ENCODE measurements at regions of chr17 and their contacts with region 1.

Region 1: GRCh38 chr17:34637548-34638525 is 58.5 kb downstream of the TMEM132E start:
- DNase-seq: peak; percentile 62 to 90 (median 82)
- ATAC-seq: peak; percentile 97
- H3K4me3 ChIP-seq: peak overlapping the region; percentile 67 to 84
- H3K4me3 Mint-ChIP-seq: peak overlapping the region; percentile 91
- H3K27ac ChIP-seq: peak overlapping the region in 1 of 2 experiments; percentile 24
- H3K27ac Mint-ChIP-seq: no peak overlapping the region
- H3K4me1 ChIP-seq: peaks cover 18% of the 10 kb centered on the region
- H3K4me1 Mint-ChIP-seq: peaks cover 17% of the 10 kb centered on the region
- H3K27me3 ChIP-seq: no peaks in the 10 kb centered on the region
- H3K27me3 Mint-ChIP-seq: peaks cover 6% of the 10 kb centered on the region
- CTCF ChIP-seq: peak; percentile 77

Region 2: GRCh38 chr17:34420254-34420766 is 217.5 kb before region 1 on chr17:
- CTCF ChIA-PET with region 1: interaction called, 8 read pairs
- POLR2A ChIA-PET with region 1: no interaction called
- intact Hi-C with region 1: loop called in 1 of 2 experiments (anchors 1 kb)
- DNase-seq: peak; percentile 26 to 79 (median 67)
- ATAC-seq: peak; percentile 64
- H3K4me3 ChIP-seq: no peak overlapping the region
- H3K4me3 Mint-ChIP-seq: no peak overlapping the region
- H3K27ac ChIP-seq: no peak overlapping the region
- H3K27ac Mint-ChIP-seq: no peak overlapping the region
- H3K4me1 ChIP-seq: no peaks in the 10 kb centered on the region
- H3K4me1 Mint-ChIP-seq: no peaks in the 10 kb centered on the region
- H3K27me3 ChIP-seq: peaks cover 0 to 4% of the 10 kb centered on the region in 2 experiments
- H3K27me3 Mint-ChIP-seq: peaks cover 40% of the 10 kb centered on the region
- CTCF ChIP-seq: peak; percentile 96

Region 3: GRCh38 chr17:34542700-34543336 is 95.0 kb before region 1 on chr17:
- CTCF ChIA-PET with region 1: interaction called, 25 read pairs
- POLR2A ChIA-PET with region 1: no interaction called
- intact Hi-C with region 1: loop called (anchors 2 kb)
- DNase-seq: peak in 8 of 9 experiments; percentile 16 to 71 (median 59)
- ATAC-seq: no peak
- H3K4me3 ChIP-seq: no peak overlapping the region
- H3K4me3 Mint-ChIP-seq: no peak overlapping the region
- H3K27ac ChIP-seq: no peak overlapping the region
- H3K27ac Mint-ChIP-seq: no peak overlapping the region
- H3K4me1 ChIP-seq: no peaks in the 10 kb centered on the region
- H3K4me1 Mint-ChIP-seq: no peaks in the 10 kb centered on the region
- H3K27me3 ChIP-seq: no peaks in the 10 kb centered on the region
- H3K27me3 Mint-ChIP-seq: peaks cover 32% of the 10 kb centered on the region
- CTCF ChIP-seq: peak; percentile 71

Region 4: GRCh38 chr17:34562387-34562786 is 75.5 kb before region 1 on chr17:
- CTCF ChIA-PET with region 1: interaction called, 3 read pairs
- POLR2A ChIA-PET with region 1: no interaction called
- intact Hi-C with region 1: loop called in 1 of 2 experiments (anchors 5 kb)
- DNase-seq: peak in 2 of 9 experiments; percentile 35 to 51
- ATAC-seq: peak; percentile 75
- H3K4me3 ChIP-seq: no peak overlapping the region
- H3K4me3 Mint-ChIP-seq: no peak overlapping the region
- H3K27ac ChIP-seq: no peak overlapping the region
- H3K27ac Mint-ChIP-seq: no peak overlapping the region
- H3K4me1 ChIP-seq: no peaks in the 10 kb centered on the region
- H3K4me1 Mint-ChIP-seq: no peaks in the 10 kb centered on the region
- H3K27me3 ChIP-seq: peaks cover 0 to 4% of the 10 kb centered on the region in 2 experiments
- H3K27me3 Mint-ChIP-seq: peaks cover 12% of the 10 kb centered on the region
- CTCF ChIP-seq: peak; percentile 52

Region 5: GRCh38 chr17:34584805-34585416 is 52.9 kb before region 1 on chr17:
- CTCF ChIA-PET with region 1: interaction called, 5 read pairs
- POLR2A ChIA-PET with region 1: no interaction called
- intact Hi-C with region 1: loop called (anchors 1 kb)
- DNase-seq: peak in 2 of 9 experiments; percentile 22 to 47
- ATAC-seq: peak; percentile 36
- H3K4me3 ChIP-seq: no peak overlapping the region
- H3K4me3 Mint-ChIP-seq: no peak overlapping the region
- H3K27ac ChIP-seq: no peak overlapping the region
- H3K27ac Mint-ChIP-seq: no peak overlapping the region
- H3K4me1 ChIP-seq: peaks cover 22% of the 10 kb centered on the region
- H3K4me1 Mint-ChIP-seq: peaks cover 11% of the 10 kb centered on the region
- H3K27me3 ChIP-seq: peaks cover 19 to 20% of the 10 kb centered on the region in 2 experiments
- H3K27me3 Mint-ChIP-seq: peaks cover 48% of the 10 kb centered on the region
- CTCF ChIP-seq: no peak

Region 6: DNA sequence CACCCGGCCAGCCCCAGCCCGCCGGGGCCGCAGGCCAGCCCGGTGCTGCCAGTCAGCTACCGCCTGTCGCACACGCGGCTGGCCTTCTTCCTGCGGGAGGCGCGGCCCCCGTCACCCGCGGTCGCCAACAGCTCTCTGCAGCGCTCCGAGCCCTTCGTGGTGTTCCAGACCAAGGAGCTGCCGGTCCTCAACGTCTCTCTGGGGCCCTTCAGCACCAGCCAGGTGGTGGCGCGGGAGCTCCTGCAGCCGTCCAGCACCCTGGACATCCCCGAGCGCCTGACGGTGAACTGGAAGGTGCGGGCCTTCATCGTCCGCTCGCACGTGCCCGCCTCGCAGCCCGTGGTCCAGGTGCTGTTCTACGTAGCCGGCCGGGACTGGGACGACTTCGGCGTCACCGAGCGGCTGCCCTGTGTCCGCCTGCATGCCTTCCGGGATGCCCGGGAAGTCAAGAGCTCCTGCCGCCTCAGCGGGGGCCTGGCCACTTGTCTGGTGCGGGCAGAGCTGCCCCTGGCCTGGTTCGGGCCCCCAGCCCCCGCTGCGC is 11.6 kb before region 1 on chr17:
- CTCF ChIA-PET with region 1: interaction called, 17 read pairs
- POLR2A ChIA-PET with region 1: no interaction called
- intact Hi-C with region 1: no loop called
- DNase-seq: peak in 2 of 9 experiments; percentile 9 to 17
- ATAC-seq: no peak
- H3K4me3 ChIP-seq: no peak overlapping the region
- H3K4me3 Mint-ChIP-seq: no peak overlapping the region
- H3K27ac ChIP-seq: no peak overlapping the region
- H3K27ac Mint-ChIP-seq: no peak overlapping the region
- H3K4me1 ChIP-seq: no peaks in the 10 kb centered on the region
- H3K4me1 Mint-ChIP-seq: peaks cover 7% of the 10 kb centered on the region
- H3K27me3 ChIP-seq: peaks cover 12 to 18% of the 10 kb centered on the region in 2 experiments
- H3K27me3 Mint-ChIP-seq: peaks cover 59% of the 10 kb centered on the region
- CTCF ChIP-seq: no peak

Region 7: DNA sequence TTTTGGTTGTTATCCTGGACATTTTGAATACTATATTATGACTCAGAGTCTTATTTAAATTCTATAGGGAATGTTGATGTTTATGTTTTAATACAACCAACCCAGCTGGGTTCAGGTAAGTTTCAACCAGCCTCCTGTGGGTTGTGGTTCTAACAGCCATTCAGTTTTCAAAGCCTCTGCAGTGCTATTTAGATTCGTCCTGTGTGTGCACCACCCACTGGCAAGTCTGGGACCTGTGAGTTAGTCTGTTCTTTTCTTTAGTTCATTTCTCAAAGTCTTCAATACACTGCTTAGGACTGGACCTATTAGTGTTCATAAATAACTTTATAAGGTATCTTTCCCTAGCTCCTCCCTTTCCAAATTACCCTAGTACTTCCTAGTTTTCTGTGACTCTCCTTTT is 112.2 kb after region 1 on chr17:
- CTCF ChIA-PET with region 1: no interaction called
- POLR2A ChIA-PET with region 1: no interaction called
- intact Hi-C with region 1: no loop called
- DNase-seq: no peak
- ATAC-seq: no peak
- H3K4me3 ChIP-seq: no peak overlapping the region
- H3K4me3 Mint-ChIP-seq: no peak overlapping the region
- H3K27ac ChIP-seq: no peak overlapping the region
- H3K27ac Mint-ChIP-seq: no peak overlapping the region
- H3K4me1 ChIP-seq: no peaks in the 10 kb centered on the region
- H3K4me1 Mint-ChIP-seq: no peaks in the 10 kb centered on the region
- H3K27me3 ChIP-seq: no peaks in the 10 kb centered on the region
- H3K27me3 Mint-ChIP-seq: peaks cover 35% of the 10 kb centered on the region
- CTCF ChIP-seq: no peak